ENCODE measurements at regions of chr6 and their contacts with region 1.

Region 1: GRCh38 chr6:33837971-33838665 is 34.3 kb upstream of the MLN start:
- DNase-seq: no peak
- ATAC-seq: no peak
- H3K4me3 ChIP-seq: no peak overlapping the region
- H3K4me3 Mint-ChIP-seq: no peak overlapping the region
- H3K27ac ChIP-seq: no peak overlapping the region
- H3K27ac Mint-ChIP-seq: no peak overlapping the region
- H3K4me1 ChIP-seq: peaks cover 15% of the 10 kb centered on the region
- H3K4me1 Mint-ChIP-seq: peaks cover 9% of the 10 kb centered on the region
- H3K27me3 ChIP-seq: no peaks in the 10 kb centered on the region
- H3K27me3 Mint-ChIP-seq: no peaks in the 10 kb centered on the region
- CTCF ChIP-seq: no peak

Region 2: DNA sequence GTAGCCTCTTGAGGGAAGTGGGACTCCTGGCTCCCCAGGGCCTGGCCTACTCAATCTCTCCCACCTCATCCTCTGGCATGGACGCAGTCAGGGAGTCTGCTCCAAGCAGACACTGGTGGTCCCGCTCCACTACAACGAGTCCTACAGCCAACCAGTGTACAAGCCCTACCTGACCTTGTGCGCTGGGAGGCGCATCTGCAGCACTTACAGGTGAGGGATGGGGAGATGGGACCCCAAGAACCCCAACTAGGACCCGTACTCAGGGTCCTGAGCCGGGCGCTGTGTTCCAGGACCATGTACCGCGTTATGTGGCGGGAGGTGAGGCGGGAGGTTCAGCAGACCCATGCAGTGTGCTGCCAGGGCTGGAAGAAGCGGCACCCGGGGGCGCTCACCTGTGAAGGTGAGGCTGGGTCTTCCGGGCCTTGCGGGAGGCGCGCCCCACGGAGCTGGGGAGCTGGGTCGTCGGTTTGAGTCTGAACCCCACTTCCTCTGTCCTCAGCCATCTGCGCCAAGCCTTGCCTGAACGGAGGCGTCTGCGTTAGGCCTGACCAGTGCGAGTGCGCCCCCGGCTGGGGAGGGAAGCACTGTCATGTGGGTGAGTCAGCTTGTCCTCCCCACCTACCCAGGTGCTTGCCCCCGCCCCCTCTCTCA is 1671.6 kb before region 1 on chr6:
- CTCF ChIA-PET with region 1: no interaction called
- POLR2A ChIA-PET with region 1: no interaction called
- intact Hi-C with region 1: no loop called
- DNase-seq: peak in 2 of 14 experiments; percentile 7 to 34
- ATAC-seq: no peak
- H3K4me3 ChIP-seq: no peak overlapping the region
- H3K4me3 Mint-ChIP-seq: no peak overlapping the region
- H3K27ac ChIP-seq: no peak overlapping the region
- H3K27ac Mint-ChIP-seq: no peak overlapping the region
- H3K4me1 ChIP-seq: no peaks in the 10 kb centered on the region
- H3K4me1 Mint-ChIP-seq: peaks cover 15% of the 10 kb centered on the region
- H3K27me3 ChIP-seq: no peaks in the 10 kb centered on the region
- H3K27me3 Mint-ChIP-seq: no peaks in the 10 kb centered on the region
- CTCF ChIP-seq: no peak

Region 3: DNA sequence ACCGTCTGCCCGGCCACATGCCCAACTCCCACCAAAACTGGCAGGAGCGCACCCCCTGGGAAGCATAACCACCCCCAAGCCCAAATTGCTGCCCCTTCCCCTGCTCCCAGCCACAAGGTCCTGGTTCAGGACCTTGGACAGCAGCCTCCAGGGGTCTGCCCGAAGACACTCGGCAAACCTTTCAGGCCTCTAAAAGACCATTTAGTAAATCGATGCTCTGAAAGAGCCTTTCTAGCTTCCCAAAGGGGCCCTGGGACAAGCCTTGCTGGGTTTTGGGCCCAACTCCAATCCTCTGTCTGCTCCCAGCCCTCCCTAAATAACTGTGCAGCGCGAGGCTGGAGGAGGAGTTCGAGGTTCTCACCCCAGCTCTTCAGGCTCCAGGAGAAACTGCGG is 277.3 kb after region 1 on chr6:
- CTCF ChIA-PET with region 1: no interaction called
- POLR2A ChIA-PET with region 1: no interaction called
- intact Hi-C with region 1: loop called in 1 of 2 experiments (anchors 10 kb)
- DNase-seq: peak in 5 of 14 experiments; percentile 6 to 47 (median 15)
- ATAC-seq: no peak
- H3K4me3 ChIP-seq: no peak overlapping the region
- H3K4me3 Mint-ChIP-seq: no peak overlapping the region
- H3K27ac ChIP-seq: no peak overlapping the region
- H3K27ac Mint-ChIP-seq: no peak overlapping the region
- H3K4me1 ChIP-seq: no peaks in the 10 kb centered on the region
- H3K4me1 Mint-ChIP-seq: no peaks in the 10 kb centered on the region
- H3K27me3 ChIP-seq: peaks cover 8 to 15% of the 10 kb centered on the region in 2 experiments
- H3K27me3 Mint-ChIP-seq: peaks cover 48% of the 10 kb centered on the region
- CTCF ChIP-seq: no peak

Region 4: DNA sequence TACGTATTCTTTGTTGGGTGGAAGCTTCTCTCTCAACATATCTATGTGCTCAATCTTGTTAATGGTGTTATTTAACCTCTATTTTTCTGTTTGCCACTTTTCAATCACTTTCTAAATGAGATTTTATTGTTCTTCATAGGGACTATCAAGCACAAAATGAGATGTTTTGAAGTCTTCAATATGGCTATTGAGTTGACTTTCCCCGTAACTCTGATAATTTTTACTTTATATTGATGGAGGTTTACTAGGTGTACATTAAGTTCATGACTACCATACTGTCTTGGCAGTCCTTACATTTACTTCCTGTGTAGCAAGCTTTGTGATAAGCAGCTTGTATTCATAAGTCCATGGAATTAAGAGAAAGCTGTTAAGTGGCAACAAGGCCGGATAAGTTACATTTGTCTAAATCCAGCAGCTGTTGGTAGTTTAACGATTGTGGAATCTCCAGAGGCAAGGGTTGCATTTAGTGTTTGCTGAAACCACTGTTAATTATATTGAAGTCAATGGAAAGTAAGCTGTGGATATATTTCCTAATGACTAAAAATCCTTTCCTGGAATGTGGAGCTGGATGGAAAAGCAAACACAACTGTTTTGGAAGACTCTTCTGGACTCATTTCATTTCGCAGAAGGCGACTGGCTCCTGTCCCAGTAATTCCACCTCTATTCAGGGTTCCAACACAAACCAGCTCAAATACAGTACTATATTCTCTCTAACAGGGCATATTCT is 468.0 kb after region 1 on chr6:
- CTCF ChIA-PET with region 1: no interaction called
- POLR2A ChIA-PET with region 1: no interaction called
- intact Hi-C with region 1: no loop called
- DNase-seq: no peak
- ATAC-seq: no peak
- H3K4me3 ChIP-seq: no peak overlapping the region
- H3K4me3 Mint-ChIP-seq: no peak overlapping the region
- H3K27ac ChIP-seq: no peak overlapping the region
- H3K27ac Mint-ChIP-seq: no peak overlapping the region
- H3K4me1 ChIP-seq: no peaks in the 10 kb centered on the region
- H3K4me1 Mint-ChIP-seq: peaks cover 12% of the 10 kb centered on the region
- H3K27me3 ChIP-seq: no peaks in the 10 kb centered on the region
- H3K27me3 Mint-ChIP-seq: no peaks in the 10 kb centered on the region
- CTCF ChIP-seq: no peak

Measured in CD4-positive, alpha-beta T cell (primary cell).